ENCODE measurements at regions of chr12 and their contacts with region 1.

Region 1: GRCh38 chr12:120194534-120195395 is at the start of gene GCN1:
- DNase-seq: no peak
- H3K4me3 ChIP-seq: peak within 1 kb of the TSS; percentile 84
- CTCF ChIP-seq: no peak

Region 2: GRCh38 chr12:120116792-120117651 is 77.7 kb before region 1 on chr12:
- CTCF ChIA-PET with region 1: no interaction called
- POLR2A ChIA-PET with region 1: interaction called, 16 read pairs
- DNase-seq: peak; percentile 40
- H3K4me3 ChIP-seq: peak overlapping the region; percentile 90
- CTCF ChIP-seq: no peak

Region 3: DNA sequence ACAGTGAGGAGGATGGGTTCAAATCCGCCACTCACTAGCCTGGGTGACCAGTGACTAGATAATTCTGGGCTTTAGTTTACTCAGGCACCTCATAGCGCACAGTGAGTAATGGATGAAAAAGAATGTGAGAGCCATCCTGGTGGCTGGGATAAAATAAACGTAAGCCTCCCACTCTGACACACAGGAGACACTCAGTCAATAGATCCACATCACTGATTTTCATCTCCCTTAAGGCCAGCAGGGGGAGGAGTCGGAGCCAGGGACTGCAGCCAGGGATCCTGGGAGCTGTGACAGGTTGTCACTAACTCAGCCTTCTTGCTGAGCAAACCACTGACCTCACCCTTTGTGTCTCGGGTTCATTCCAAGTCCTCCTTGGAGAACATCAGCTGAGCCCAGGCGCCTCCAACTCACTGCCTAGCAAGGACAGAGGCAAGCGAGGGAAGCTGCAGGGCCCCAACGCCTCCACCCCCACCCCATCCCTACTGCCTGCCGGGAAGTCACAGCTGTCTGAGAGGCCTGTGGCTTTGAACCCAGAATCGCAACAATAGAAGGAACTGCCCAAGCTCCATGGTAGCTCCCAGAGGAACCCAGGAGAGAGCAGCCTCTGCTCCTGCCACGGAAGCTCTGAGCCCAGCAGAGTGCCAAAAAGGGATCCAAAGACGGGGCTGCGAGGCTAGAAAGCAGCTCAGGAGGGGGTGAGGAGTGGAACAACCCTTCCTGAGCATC is 40.0 kb after region 1 on chr12:
- CTCF ChIA-PET with region 1: interaction called, 280 read pairs
- POLR2A ChIA-PET with region 1: interaction called, 122 read pairs
- DNase-seq: peak; percentile 88
- H3K4me3 ChIP-seq: peak overlapping the region; percentile 20
- CTCF ChIP-seq: peak; percentile 66

Region 4: GRCh38 chr12:120249875-120250795 is 55.4 kb after region 1 on chr12:
- CTCF ChIA-PET with region 1: no interaction called
- POLR2A ChIA-PET with region 1: interaction called, 18 read pairs
- DNase-seq: no peak
- H3K4me3 ChIP-seq: no peak overlapping the region
- CTCF ChIP-seq: no peak

Region 5: DNA sequence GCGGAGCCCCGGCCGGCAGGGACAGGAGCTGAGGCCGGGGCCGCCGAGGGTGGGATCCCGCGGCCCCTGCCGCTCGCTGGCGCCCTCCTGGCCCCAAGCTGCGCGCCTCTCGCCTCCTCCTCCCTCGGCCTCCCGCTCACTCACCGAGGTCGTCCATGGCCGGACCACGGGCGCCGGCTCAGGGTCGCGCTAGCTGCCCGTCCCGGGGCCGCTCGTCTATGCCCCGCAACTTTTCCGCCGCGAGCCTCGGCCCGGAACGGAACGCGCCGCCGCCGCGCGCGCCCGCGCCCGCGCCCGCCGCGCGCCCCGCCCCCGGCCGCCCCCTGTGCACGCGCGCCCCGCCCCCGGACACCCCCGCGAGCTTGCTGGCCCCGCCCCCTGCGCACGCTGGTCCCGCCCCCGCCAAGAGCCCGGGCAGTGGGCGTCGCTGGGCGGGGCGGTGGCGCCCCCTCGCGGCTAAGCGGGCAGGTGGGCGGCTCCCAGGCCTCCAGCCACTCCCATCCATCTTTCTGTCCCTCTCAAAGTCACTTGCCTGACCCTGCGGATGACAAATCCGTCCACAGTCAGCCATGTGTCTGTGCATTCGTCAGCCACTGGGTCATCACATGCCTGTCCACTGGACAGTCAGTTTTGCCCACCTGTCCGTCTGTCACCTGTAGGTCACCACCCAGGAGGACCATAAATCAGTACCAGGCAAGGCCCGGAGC is 70.9 kb after region 1 on chr12 and contains the start of gene PXN:
- CTCF ChIA-PET with region 1: interaction called, 125 read pairs
- POLR2A ChIA-PET with region 1: interaction called, 134 read pairs
- DNase-seq: no peak
- H3K4me3 ChIP-seq: peak within 1 kb of the TSS; percentile 81
- CTCF ChIP-seq: peak; percentile 88

Region 6: GRCh38 chr12:120562906-120563305 is 368.1 kb after region 1 on chr12:
- CTCF ChIA-PET with region 1: no interaction called
- POLR2A ChIA-PET with region 1: no interaction called
- DNase-seq: no peak
- H3K4me3 ChIP-seq: no peak overlapping the region
- CTCF ChIP-seq: no peak

Measured in AG04449 (cell line).